CD8-positive, alpha-beta T cell (primary cell): ENCODE measurements at regions of chr11 and their contacts with region 1.

Region 1: GRCh38 chr11:69463181-69463994 is 18.1 kb upstream of the LINC01488 start:
- DNase-seq: no peak
- ATAC-seq: no peak
- H3K4me3 ChIP-seq: no peak overlapping the region
- H3K4me3 Mint-ChIP-seq: no peak overlapping the region
- H3K27ac ChIP-seq: no peak overlapping the region
- H3K27ac Mint-ChIP-seq: no peak overlapping the region
- H3K4me1 ChIP-seq: no peaks in the 10 kb centered on the region
- H3K4me1 Mint-ChIP-seq: no peaks in the 10 kb centered on the region
- H3K27me3 ChIP-seq: no peaks in the 10 kb centered on the region
- H3K27me3 Mint-ChIP-seq: peaks cover 7% of the 10 kb centered on the region
- CTCF ChIP-seq: no peak

Region 2: GRCh38 chr11:69480547-69481392 is 17.4 kb after region 1 on chr11:
- CTCF ChIA-PET with region 1: interaction called, 3 read pairs
- POLR2A ChIA-PET with region 1: interaction called, 3 read pairs
- intact Hi-C with region 1: loop called in 1 of 2 experiments (anchors 1 kb)
- DNase-seq: no peak
- ATAC-seq: no peak
- H3K4me3 ChIP-seq: no peak overlapping the region
- H3K4me3 Mint-ChIP-seq: no peak overlapping the region
- H3K27ac ChIP-seq: no peak overlapping the region
- H3K27ac Mint-ChIP-seq: no peak overlapping the region
- H3K4me1 ChIP-seq: no peaks in the 10 kb centered on the region
- H3K4me1 Mint-ChIP-seq: no peaks in the 10 kb centered on the region
- H3K27me3 ChIP-seq: no peaks in the 10 kb centered on the region
- H3K27me3 Mint-ChIP-seq: no peaks in the 10 kb centered on the region
- CTCF ChIP-seq: no peak

Region 3: GRCh38 chr11:69746752-69747742 is 283.7 kb after region 1 on chr11:
- CTCF ChIA-PET with region 1: no interaction called
- POLR2A ChIA-PET with region 1: no interaction called
- intact Hi-C with region 1: no loop called
- DNase-seq: no peak
- ATAC-seq: no peak
- H3K4me3 ChIP-seq: no peak overlapping the region
- H3K4me3 Mint-ChIP-seq: no peak overlapping the region
- H3K27ac ChIP-seq: no peak overlapping the region
- H3K27ac Mint-ChIP-seq: no peak overlapping the region
- H3K4me1 ChIP-seq: no peaks in the 10 kb centered on the region
- H3K4me1 Mint-ChIP-seq: no peaks in the 10 kb centered on the region
- H3K27me3 ChIP-seq: no peaks in the 10 kb centered on the region
- H3K27me3 Mint-ChIP-seq: peaks cover 16% of the 10 kb centered on the region
- CTCF ChIP-seq: no peak